Activated CD4-positive, alpha-beta T cell treated with anti-CD3 and anti-CD28 coated beads for 36 hours (primary cell): ENCODE measurements at regions of chr15 and their contacts with region 1.

Region 1: GRCh38 chr15:60899322-60899966 is 329.7 kb downstream of the RORA start:
- DNase-seq: peak; percentile 42
- ATAC-seq: peak; percentile 85
- H3K4me3 Mint-ChIP-seq: no peak overlapping the region
- H3K27ac Mint-ChIP-seq: peak overlapping the region; percentile 66
- H3K4me1 Mint-ChIP-seq: peaks cover 53% of the 10 kb centered on the region
- H3K27me3 Mint-ChIP-seq: peaks cover 6% of the 10 kb centered on the region

Region 2: GRCh38 chr15:60485365-60486055 is 413.9 kb before region 1 on chr15:
- CTCF ChIA-PET with region 1: no interaction called
- POLR2A ChIA-PET with region 1: no interaction called
- intact Hi-C with region 1: no loop called
- DNase-seq: no peak
- ATAC-seq: no peak
- H3K4me3 Mint-ChIP-seq: no peak overlapping the region
- H3K27ac Mint-ChIP-seq: no peak overlapping the region
- H3K4me1 Mint-ChIP-seq: peaks cover 18% of the 10 kb centered on the region
- H3K27me3 Mint-ChIP-seq: no peaks in the 10 kb centered on the region

Region 3: GRCh38 chr15:60548101-60548500 is 351.3 kb before region 1 on chr15:
- CTCF ChIA-PET with region 1: interaction called, 3 read pairs
- POLR2A ChIA-PET with region 1: interaction called, 5 read pairs
- intact Hi-C with region 1: loop called in 1 of 2 experiments (anchors 1 kb)
- DNase-seq: peak; percentile 84
- ATAC-seq: peak; percentile 83
- H3K4me3 Mint-ChIP-seq: peak overlapping the region; percentile 61
- H3K27ac Mint-ChIP-seq: peak overlapping the region; percentile 96
- H3K4me1 Mint-ChIP-seq: peaks cover 97% of the 10 kb centered on the region
- H3K27me3 Mint-ChIP-seq: no peaks in the 10 kb centered on the region

Region 4: DNA sequence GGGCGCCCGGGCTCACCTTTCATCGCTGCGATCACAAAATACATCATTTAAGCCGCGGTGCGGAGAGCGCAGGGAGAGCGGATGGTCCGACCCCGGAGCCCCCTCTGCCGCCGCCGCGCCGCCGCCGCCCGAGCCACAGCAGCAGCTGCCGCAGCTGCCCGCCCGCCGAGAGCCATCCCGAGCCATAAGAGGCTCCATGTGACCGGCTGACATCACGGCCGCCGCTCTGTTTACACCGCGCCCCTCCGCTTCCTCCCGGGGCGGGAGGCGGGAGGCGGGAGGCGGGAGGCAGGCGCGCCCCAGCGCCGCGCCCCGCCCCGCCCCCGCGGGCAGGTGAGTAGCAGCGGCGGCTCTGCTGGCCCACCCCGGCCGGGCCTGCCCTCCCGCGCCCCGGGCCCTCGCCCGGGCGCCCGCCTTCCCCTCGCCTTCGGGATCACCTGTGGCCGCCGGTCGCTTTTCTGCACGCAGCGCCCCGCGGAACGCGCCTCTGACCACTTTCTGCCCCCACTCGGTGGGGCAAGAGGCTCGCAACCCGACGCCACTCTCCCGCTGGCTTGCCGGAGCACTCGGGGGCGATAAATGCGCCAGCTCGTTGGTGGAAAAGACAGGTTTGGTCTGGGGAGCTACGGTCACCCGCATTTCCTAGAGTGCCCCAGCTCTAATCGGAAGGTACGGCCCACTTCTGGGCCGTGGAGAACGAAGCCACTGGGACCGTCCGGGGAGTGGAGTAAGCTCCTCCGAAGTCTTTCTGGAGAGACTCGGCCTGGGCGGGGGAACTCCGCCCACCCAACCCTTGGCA is 306.9 kb before region 1 on chr15:
- CTCF ChIA-PET with region 1: interaction called, 19 read pairs
- POLR2A ChIA-PET with region 1: interaction called, 5 read pairs
- intact Hi-C with region 1: loop called in 1 of 2 experiments (anchors 5 kb)
- DNase-seq: peak; percentile 91
- ATAC-seq: peak; percentile 85
- H3K4me3 Mint-ChIP-seq: peak overlapping the region; percentile 76
- H3K27ac Mint-ChIP-seq: peak overlapping the region; percentile 51
- H3K4me1 Mint-ChIP-seq: peaks cover 47% of the 10 kb centered on the region
- H3K27me3 Mint-ChIP-seq: no peaks in the 10 kb centered on the region

Region 5: DNA sequence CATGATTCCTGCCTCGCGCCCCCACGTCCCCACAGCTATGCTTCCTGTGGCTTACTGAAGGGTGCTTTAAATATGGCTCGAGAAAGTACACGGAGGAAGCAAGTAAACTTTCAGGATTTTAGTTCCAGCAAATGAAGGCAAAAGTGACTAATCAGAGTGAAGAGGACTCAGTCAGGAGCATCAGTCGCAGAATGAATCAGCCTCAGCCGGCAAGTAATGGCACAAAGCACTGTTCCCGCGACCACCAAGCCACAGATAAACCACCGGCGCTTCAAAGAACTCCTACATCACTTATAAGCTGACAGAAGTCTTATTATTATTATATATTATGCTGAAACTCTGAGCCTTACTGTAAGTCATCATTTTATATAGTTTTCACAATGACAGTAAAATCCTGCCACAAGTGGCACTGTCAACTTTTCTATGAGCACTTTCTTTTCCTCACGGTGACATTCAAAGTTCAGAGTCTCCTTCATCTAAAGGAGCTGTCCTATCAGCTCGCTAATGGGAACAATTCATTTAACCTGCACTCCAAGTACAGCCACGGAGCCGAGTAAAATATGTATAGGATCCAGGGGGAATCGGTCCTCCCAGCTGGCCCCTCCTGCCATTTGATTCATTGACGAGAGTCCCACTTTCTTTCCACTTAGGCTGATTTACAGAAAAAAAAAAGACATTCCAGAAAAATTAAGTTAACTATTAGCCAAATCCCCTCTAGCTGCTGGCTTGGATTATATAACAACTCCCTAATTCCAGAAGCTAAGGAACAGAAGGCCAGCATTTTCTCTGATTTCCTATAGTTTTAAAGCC is 203.5 kb before region 1 on chr15:
- CTCF ChIA-PET with region 1: interaction called, 3 read pairs
- POLR2A ChIA-PET with region 1: no interaction called
- intact Hi-C with region 1: loop called (anchors 1 to 2 kb)
- DNase-seq: peak; percentile 93
- ATAC-seq: peak; percentile 84
- H3K4me3 Mint-ChIP-seq: peak overlapping the region; percentile 58
- H3K27ac Mint-ChIP-seq: peak overlapping the region; percentile 81
- H3K4me1 Mint-ChIP-seq: peaks cover 74% of the 10 kb centered on the region
- H3K27me3 Mint-ChIP-seq: no peaks in the 10 kb centered on the region

Region 6: DNA sequence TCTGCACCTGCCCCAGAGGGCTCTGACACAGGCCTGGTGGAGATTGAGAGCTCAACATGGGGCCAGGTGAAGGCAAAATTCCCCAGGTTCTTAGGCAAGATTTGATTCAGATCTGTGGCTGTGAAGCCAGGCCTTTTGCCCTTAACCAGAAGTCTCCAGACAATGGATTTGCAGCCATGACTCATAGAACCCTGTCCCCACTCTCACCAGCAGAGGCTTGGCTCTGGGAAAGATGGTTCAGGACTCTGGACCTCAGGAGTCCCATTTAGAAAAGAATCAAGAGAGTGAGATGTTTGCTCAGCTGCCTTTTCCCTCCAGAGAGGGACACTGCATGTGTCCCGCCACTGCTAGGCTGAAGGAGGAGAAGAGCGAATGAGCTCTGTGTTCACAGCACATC is 59.1 kb before region 1 on chr15:
- CTCF ChIA-PET with region 1: interaction called, 4 read pairs
- POLR2A ChIA-PET with region 1: interaction called, 4 read pairs
- intact Hi-C with region 1: loop called (anchors 1 to 2 kb)
- DNase-seq: peak; percentile 34
- ATAC-seq: peak; percentile 5
- H3K4me3 Mint-ChIP-seq: peak overlapping the region; percentile 60
- H3K27ac Mint-ChIP-seq: peak overlapping the region; percentile 62
- H3K4me1 Mint-ChIP-seq: peaks cover 77% of the 10 kb centered on the region
- H3K27me3 Mint-ChIP-seq: peaks cover 2% of the 10 kb centered on the region

Region 7: GRCh38 chr15:61063875-61064320 is 164.5 kb after region 1 on chr15:
- CTCF ChIA-PET with region 1: no interaction called
- POLR2A ChIA-PET with region 1: no interaction called
- intact Hi-C with region 1: no loop called
- DNase-seq: no peak
- ATAC-seq: no peak
- H3K4me3 Mint-ChIP-seq: no peak overlapping the region
- H3K27ac Mint-ChIP-seq: no peak overlapping the region
- H3K4me1 Mint-ChIP-seq: no peaks in the 10 kb centered on the region
- H3K27me3 Mint-ChIP-seq: peaks cover 14% of the 10 kb centered on the region